ENCODE measurements at regions of chr15 and their contacts with region 1.

Region 1: DNA sequence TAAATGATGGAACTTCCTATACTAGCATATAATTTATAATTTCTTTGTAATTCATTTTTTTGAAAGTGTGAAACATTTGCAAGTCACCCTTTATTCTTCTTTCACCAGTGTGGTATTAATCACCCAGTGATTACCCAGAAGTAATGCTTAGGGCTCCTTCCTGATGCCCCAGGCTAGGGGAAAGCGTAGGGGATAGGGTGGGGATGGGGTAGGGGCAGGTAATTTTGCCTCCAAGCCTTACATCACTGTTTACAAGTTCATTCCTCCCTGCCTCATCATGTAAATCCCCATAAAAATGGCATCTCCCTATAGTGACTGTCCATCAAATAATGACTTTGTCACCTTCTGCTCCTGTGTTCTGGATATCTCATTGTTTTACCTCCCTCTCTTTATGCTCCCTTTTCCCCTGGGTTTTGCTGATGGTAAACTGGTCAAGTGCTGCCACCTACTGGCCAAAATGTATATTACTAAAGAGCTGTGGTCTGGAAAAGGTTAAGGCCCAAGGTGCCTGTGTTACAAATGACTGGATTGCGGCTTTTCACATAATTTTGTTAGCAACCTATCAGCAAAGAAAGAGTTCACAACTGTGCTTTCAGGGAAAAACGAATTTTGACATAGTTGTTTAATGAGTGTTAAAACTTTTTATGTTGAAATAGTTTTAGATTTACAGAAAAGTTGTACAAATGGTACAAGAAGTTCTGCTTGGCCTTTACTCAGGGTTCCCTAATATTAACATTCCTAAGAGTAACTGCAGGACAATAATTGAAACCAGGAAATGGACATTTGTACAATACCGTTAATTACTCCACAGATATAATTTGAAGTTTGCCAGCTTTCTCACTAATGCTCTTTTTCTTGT is 54.7 kb downstream of the ONECUT1 start:
- DNase-seq: peak in 1 of 3 donors; percentile 92
- ATAC-seq: peak; percentile 94
- H3K4me3 ChIP-seq: no peak overlapping the region
- H3K4me1 ChIP-seq: peaks cover under 1% of the 10 kb centered on the region
- CTCF ChIP-seq: peak; percentile 45

Region 2: GRCh38 chr15:52256366-52256765 is 479.1 kb before region 1 on chr15:
- intact Hi-C with region 1: loop called (anchors 5 to 10 kb)
- DNase-seq: peak; percentile 59 to 86 (median 66)
- ATAC-seq: peak; percentile 86
- H3K4me3 ChIP-seq: no peak overlapping the region
- H3K4me1 ChIP-seq: no peaks in the 10 kb centered on the region
- CTCF ChIP-seq: no peak

Region 3: GRCh38 chr15:52326756-52327155 is 408.7 kb before region 1 on chr15:
- intact Hi-C with region 1: loop called in 1 of 2 experiments (anchors 10 kb)
- DNase-seq: no peak
- ATAC-seq: no peak
- H3K4me3 ChIP-seq: no peak overlapping the region
- H3K4me1 ChIP-seq: peaks cover 5% of the 10 kb centered on the region
- CTCF ChIP-seq: no peak

Region 4: DNA sequence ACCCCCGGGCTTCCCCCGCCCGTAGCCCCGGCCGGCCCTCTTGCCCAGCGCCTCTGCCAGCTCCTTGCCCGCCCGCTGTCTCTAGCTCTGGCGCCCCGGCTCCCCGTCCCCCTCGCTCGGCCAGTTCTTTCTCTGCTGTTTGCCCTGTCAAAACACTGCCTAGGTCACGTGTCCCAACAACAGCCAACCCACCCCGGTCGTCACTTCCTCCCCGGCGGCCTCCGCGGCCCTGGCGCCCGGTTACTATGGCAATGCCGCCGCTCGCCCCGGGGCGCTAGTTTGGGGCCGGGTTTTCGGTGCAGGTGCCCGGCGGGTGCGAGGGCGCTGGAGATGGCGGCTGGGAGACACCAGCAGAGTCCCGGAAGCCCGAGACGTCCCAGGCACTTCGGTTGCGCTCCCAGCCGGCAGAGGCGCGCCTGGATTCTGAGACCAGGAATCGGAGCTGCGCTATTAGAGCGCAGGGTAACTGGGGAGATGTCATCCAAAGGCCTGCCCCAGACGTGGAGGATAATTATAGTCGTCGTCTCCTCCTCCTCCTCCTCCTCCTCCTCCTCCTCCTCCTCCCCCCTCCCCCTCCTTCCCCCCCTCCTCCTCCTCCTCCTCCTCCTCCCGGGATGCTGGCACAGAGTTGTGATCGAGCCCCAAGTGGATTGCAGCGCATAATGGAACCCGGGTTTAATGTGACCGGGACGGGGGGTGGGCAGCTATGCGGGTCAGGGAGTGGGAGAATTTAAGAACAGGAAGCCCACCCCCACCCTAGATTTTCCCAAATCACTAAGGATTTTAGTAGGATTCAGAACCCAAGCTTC is 56.0 kb before region 1 on chr15 and contains the start of gene ATOSA:
- intact Hi-C with region 1: loop called in 1 of 2 experiments (anchors 10 kb)
- DNase-seq: peak; percentile 93 to 95 (median 95)
- ATAC-seq: peak; percentile 92
- H3K4me3 ChIP-seq: peak within 1 kb of the TSS; percentile 87
- H3K4me1 ChIP-seq: peaks cover 10% of the 10 kb centered on the region
- CTCF ChIP-seq: no peak
- total RNA-seq, gene ATOSA: 45.3 to 77.0 (median 53.1) TPM

Region 5: DNA sequence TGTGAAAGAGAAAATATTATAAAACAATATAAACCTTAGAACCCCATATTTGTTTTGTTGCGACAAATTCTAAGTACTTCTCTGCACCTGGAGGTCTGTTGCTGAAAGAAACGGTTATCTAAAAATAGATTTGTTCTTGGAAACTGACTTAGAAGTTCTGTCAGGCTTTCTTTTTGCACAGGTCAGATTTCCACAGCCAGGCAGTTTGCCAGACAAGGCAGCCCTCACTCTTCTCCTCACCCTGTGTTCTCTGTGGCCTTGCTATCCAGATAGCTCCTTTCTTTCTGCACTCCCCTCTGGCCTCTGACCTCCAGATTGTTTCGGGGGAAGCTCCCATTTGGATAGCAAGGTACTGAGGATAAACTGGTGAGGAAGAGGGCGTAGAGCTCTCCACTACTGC is 468.0 kb after region 1 on chr15:
- intact Hi-C with region 1: no loop called
- DNase-seq: no peak
- ATAC-seq: no peak
- H3K4me3 ChIP-seq: no peak overlapping the region
- H3K4me1 ChIP-seq: no peaks in the 10 kb centered on the region
- CTCF ChIP-seq: no peak

Measured in mucosa of descending colon (tissue), 3 donors.